ENCODE measurements at regions of chr19 and their contacts with region 1.

Region 1: DNA sequence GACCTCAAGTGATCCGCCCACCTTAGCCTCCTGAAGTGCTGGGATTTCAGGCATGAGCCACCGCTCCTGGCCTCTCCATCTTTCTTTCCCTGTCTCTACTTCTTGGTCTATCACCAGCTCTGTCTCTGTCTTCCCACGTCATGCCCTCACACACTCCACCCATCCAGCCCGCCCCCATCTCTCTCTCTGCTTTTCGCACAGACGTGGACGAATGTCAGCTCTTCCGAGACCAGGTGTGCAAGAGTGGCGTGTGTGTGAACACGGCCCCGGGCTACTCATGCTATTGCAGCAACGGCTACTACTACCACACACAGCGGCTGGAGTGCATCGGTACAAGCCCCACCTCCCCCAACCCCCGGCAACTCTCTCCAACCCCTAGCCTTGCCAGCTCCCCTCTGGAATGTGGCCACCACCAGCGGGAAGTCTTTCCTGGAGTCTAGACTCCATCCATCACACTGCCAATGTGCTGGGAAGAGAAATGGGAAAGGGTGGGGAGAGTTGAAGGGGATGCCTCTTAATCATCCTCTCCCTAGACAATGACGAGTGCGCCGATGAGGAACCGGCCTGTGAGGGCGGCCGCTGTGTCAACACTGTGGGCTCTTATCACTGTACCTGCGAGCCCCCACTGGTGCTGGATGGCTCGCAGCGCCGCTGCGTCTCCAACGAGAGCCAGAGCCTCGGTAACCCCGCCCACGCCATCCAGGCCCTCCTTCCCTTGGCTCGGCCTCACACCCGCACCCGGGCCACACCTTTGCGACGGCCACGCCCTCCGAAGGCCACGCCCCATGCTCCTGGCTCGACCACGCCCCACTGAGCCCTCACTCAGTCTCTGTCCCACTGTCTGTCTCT is 22.5 kb downstream of the LTBP4 start:
- DNase-seq: peak in 1 of 2 experiments; percentile 100
- H3K4me3 ChIP-seq: peak overlapping the region; percentile 6 to 53 (median 42); a peak in 7 of 8 replicates
- H3K27ac ChIP-seq: no peak overlapping the region; the same call in 1 of the 2 replicates
- H3K4me1 ChIP-seq: peaks cover 0 to 18% (median 8%) of the 10 kb centered on the region in 4 experiments; a peak in 6 of 7 replicates
- H3K27me3 ChIP-seq: no peaks in the 10 kb centered on the region; a peak in 1 of 7 replicates
- CTCF ChIP-seq: peak in 1 of 3 experiments; percentile 1; a peak in 1 of 4 replicates
- EP300 ChIP-seq: no peak
- POLR2A ChIP-seq: peak in 1 of 2 experiments; percentile 63; a peak in 2 of 3 replicates
- RAD21 ChIP-seq: 0 out of 4 replicates have a peak, but pooled peaks of 1 of the 2 experiments have one; percentile 0

Region 2: GRCh38 chr19:40609561-40610395 is 13.8 kb before region 1 on chr19:
- CTCF ChIA-PET with region 1: interaction called, 4 read pairs
- POLR2A ChIA-PET with region 1: interaction called, 14 read pairs
- DNase-seq: peak in 1 of 2 experiments; percentile 99
- H3K4me3 ChIP-seq: peak overlapping the region; percentile 44 to 67 (median 56)
- H3K27ac ChIP-seq: no peak overlapping the region
- H3K4me1 ChIP-seq: peaks cover 3 to 22% (median 17%) of the 10 kb centered on the region in 4 experiments
- H3K27me3 ChIP-seq: peaks cover 2 to 57% (median 54%) of the 10 kb centered on the region in 4 experiments
- CTCF ChIP-seq: no peak
- EP300 ChIP-seq: no peak
- POLR2A ChIP-seq: no peak
- RAD21 ChIP-seq: no peak